A549 (cell line): ENCODE measurements at regions of chr9 and their contacts with region 1.

Region 1: DNA sequence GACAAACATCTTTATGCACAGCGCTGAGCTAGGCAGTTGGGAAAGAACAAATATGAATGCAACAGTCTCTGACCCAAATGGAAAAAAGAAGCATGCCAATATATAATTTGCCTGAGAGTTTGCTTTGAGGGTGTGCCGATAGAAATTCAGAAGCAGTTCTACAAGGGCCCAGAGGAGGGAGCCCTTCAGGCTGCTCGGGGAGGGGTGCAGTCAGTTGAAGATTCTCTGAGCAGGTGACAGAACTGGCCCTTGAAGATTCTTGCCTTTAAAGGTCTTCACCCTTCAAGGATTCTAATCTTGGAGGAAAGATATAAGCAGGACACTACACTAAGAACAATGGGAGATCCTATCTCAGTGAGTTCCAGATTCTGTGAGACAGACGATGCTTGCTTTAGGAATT is 3.7 kb upstream of the PAPPA start:
- DNase-seq: peak in 1 of 2 experiments; percentile 76
- ATAC-seq: peak in 1 of 2 experiments; percentile 14; a peak in 2 of 6 replicates
- H3K4me3 ChIP-seq: no peak overlapping the region
- H3K27ac ChIP-seq: peak overlapping the region; percentile 87 to 99
- H3K4me1 ChIP-seq: peaks cover 55% of the 10 kb centered on the region
- CTCF ChIP-seq: peak; percentile 46; the same call in 2 of the 3 replicates
- EP300 ChIP-seq: no peak
- POLR2A ChIP-seq: no peak
- RAD21 ChIP-seq: peak; percentile 41 to 51

Region 2: DNA sequence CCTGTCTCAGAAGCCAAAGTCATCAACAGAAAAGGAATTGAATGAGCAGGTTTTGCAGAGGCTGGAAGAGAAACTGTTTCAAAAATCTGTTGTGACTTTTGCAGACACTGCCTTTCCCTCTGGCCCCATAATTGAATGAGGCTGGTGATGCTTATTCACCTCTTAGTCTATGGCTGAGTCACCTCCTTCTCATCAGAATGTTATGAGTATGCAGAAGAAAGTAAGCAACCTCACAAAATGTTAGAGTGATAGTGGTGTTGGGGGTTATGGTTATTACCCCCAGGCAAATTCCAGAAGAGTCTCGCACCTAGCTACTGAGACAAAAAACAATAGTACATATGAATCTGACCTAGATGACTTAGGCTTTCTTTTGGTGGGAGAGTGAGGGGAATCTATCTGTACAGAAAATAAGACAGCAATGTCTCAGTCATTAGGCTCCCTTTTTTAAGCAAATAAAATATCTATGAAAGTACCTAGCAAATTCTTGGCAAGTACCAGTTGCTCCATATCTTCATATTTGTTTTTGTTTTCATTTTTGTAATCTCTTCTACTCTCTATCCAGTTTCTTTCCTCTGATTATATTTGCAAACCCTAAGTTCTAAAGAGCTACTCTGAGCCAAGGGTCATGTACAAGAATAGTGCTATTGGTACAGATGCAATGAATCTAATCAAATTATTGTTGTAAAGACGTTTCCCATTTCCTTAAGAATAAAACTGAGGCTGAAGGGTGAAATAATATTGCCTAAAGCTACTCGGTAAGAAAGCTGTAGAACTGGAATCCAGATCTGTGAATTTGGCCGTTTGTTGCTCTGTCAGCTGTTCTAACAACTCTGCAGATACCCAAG is 533.8 kb before region 1 on chr9:
- CTCF ChIA-PET with region 1: no interaction called
- POLR2A ChIA-PET with region 1: interaction called, 13 read pairs
- DNase-seq: peak; percentile 79 to 82
- ATAC-seq: peak; percentile 98 to 99
- H3K4me3 ChIP-seq: no peak overlapping the region
- H3K27ac ChIP-seq: peak overlapping the region; percentile 84 to 90
- H3K4me1 ChIP-seq: peaks cover 32% of the 10 kb centered on the region
- CTCF ChIP-seq: no peak
- EP300 ChIP-seq: peak; percentile 81 to 89; a peak in 3 of 5 replicates
- POLR2A ChIP-seq: no peak
- RAD21 ChIP-seq: peak; percentile 34 to 35; a peak in 3 of 5 replicates

Region 3: GRCh38 chr9:115944166-115944948 is 205.5 kb before region 1 on chr9:
- CTCF ChIA-PET with region 1: interaction called, 20 read pairs
- POLR2A ChIA-PET with region 1: interaction called, 361 read pairs
- DNase-seq: peak; percentile 88 to 100
- ATAC-seq: peak; percentile 96 to 97
- H3K4me3 ChIP-seq: no peak overlapping the region
- H3K27ac ChIP-seq: peak overlapping the region; percentile 95 to 99
- H3K4me1 ChIP-seq: peaks cover 59% of the 10 kb centered on the region
- CTCF ChIP-seq: no peak
- EP300 ChIP-seq: peak; percentile 100
- POLR2A ChIP-seq: no peak
- RAD21 ChIP-seq: peak; percentile 52 to 92

Region 4: GRCh38 chr9:115972843-115973595 is 176.8 kb before region 1 on chr9:
- CTCF ChIA-PET with region 1: interaction called, 4 read pairs
- POLR2A ChIA-PET with region 1: interaction called, 35 read pairs
- DNase-seq: peak in 1 of 2 experiments; percentile 86
- ATAC-seq: peak; percentile 80 to 88
- H3K4me3 ChIP-seq: no peak overlapping the region
- H3K27ac ChIP-seq: peak overlapping the region; percentile 88 to 89
- H3K4me1 ChIP-seq: peaks cover 45% of the 10 kb centered on the region
- CTCF ChIP-seq: no peak
- EP300 ChIP-seq: peak; percentile 94 to 96
- POLR2A ChIP-seq: no peak
- RAD21 ChIP-seq: peak; percentile 9 to 71; a peak in 3 of 5 replicates

Region 5: GRCh38 chr9:116101516-116101915 is 48.3 kb before region 1 on chr9:
- CTCF ChIA-PET with region 1: interaction called, 3 read pairs
- POLR2A ChIA-PET with region 1: interaction called, 12 read pairs
- DNase-seq: peak; percentile 8 to 50
- ATAC-seq: peak; percentile 58 to 76; a peak in 4 of 6 replicates
- H3K4me3 ChIP-seq: no peak overlapping the region
- H3K27ac ChIP-seq: peak overlapping the region; percentile 56 to 72
- H3K4me1 ChIP-seq: peaks cover 22% of the 10 kb centered on the region
- CTCF ChIP-seq: no peak
- EP300 ChIP-seq: peak; percentile 46 to 49; a peak in 2 of 5 replicates
- POLR2A ChIP-seq: no peak
- RAD21 ChIP-seq: 0 out of 5 replicates have a peak, but pooled peaks of 1 of the 2 experiments have one; percentile 24